HCT116 (cell line): ENCODE measurements at regions of chr10 and their contacts with region 1.

Region 1: GRCh38 chr10:24778298-24778697 is 54.6 kb upstream of the ARHGAP21 start:
- DNase-seq: no peak
- ATAC-seq: no peak
- H3K4me3 ChIP-seq: no peak overlapping the region
- H3K27ac ChIP-seq: no peak overlapping the region
- H3K4me1 ChIP-seq: no peaks in the 10 kb centered on the region
- H3K27me3 ChIP-seq: no peaks in the 10 kb centered on the region
- CTCF ChIP-seq: no peak
- POLR2A ChIP-seq: no peak
- RAD21 ChIP-seq: no peak

Region 2: GRCh38 chr10:24800861-24801260 is 22.6 kb after region 1 on chr10:
- CTCF ChIA-PET with region 1: no interaction called
- POLR2A ChIA-PET with region 1: no interaction called
- RAD21 ChIA-PET with region 1: no interaction called
- intact Hi-C with region 1: no loop called
- DNase-seq: no peak
- ATAC-seq: no peak
- H3K4me3 ChIP-seq: no peak overlapping the region
- H3K27ac ChIP-seq: no peak overlapping the region
- H3K4me1 ChIP-seq: no peaks in the 10 kb centered on the region
- H3K27me3 ChIP-seq: no peaks in the 10 kb centered on the region
- CTCF ChIP-seq: no peak
- POLR2A ChIP-seq: no peak
- RAD21 ChIP-seq: no peak

Region 3: GRCh38 chr10:24814568-24815313 is 36.4 kb after region 1 on chr10:
- CTCF ChIA-PET with region 1: no interaction called
- POLR2A ChIA-PET with region 1: no interaction called
- RAD21 ChIA-PET with region 1: interaction called in 1 of 2 experiments, 10 read pairs
- intact Hi-C with region 1: no loop called
- DNase-seq: peak; percentile 54
- ATAC-seq: peak; percentile 89
- H3K4me3 ChIP-seq: peak overlapping the region in 1 of 2 experiments; percentile 32; a peak in 3 of 4 replicates
- H3K27ac ChIP-seq: peak overlapping the region; percentile 39; the same call in 1 of the 2 replicates
- H3K4me1 ChIP-seq: peaks cover 12 to 22% of the 10 kb centered on the region in 2 experiments; a peak in 3 of 4 replicates
- H3K27me3 ChIP-seq: no peaks in the 10 kb centered on the region
- CTCF ChIP-seq: no peak
- POLR2A ChIP-seq: no peak
- RAD21 ChIP-seq: peak; percentile 18; the same call in 1 of the 2 replicates